T-cell (primary cell): ENCODE measurements at regions of chr12 and their contacts with region 1.

Region 1: DNA sequence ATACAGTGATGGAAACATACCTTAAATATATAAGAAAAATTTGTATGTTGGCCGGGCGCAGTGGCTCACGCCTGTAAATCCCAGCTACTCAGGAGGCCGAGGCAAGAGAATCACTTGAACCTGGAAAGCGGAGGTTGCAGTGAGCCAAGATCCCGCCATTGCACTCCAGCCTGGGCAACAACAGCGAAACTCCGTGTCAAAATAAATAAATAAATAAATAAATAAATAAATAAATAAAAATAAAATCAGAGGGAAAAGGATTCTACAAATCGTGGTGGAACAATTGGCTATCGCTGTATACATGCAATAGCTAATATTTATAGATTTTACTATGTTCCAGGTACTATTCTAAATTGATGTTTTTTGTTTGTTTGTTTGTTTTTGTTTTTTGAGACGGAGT is 1.7 kb upstream of the ATF7 start:
- DNase-seq: no peak
- ATAC-seq: no peak
- H3K4me3 ChIP-seq: no peak overlapping the region
- H3K4me3 Mint-ChIP-seq: no peak overlapping the region
- H3K27ac ChIP-seq: no peak overlapping the region
- H3K27ac Mint-ChIP-seq: no peak overlapping the region
- H3K4me1 ChIP-seq: peaks cover 15 to 28% of the 10 kb centered on the region in 2 experiments
- H3K4me1 Mint-ChIP-seq: peaks cover 37 to 41% (median 39%) of the 10 kb centered on the region in 3 donors
- H3K27me3 ChIP-seq: peaks cover 0 to 3% of the 10 kb centered on the region in 2 experiments
- H3K27me3 Mint-ChIP-seq: no peaks in the 10 kb centered on the region

Region 2: DNA sequence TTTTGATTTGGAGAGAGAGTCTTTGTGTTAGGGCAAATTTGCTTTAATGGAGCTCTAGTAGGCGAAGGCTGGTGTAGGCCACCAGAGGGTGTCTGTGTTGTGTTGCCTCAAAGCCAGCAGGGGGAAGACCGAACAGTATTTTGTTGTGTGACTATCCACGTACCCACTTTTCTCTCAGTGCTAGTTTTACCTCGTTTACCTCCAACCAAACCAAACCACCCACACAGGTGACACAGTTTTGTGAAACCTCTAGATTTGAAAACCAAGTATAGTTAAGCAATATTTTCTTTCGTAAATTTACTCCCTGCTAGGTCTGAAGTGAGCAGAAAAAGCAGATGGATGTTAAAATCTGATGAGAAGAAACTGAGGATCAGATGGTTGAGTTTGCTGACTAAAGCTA is 84.4 kb before region 1 on chr12:
- CTCF ChIA-PET with region 1: no interaction called
- POLR2A ChIA-PET with region 1: no interaction called
- DNase-seq: peak in 33 of 35 experiments; percentile 3 to 72 (median 45)
- ATAC-seq: peak; percentile 88 to 93 (median 91)
- H3K4me3 ChIP-seq: no peak overlapping the region
- H3K4me3 Mint-ChIP-seq: no peak overlapping the region
- H3K27ac ChIP-seq: peak overlapping the region; percentile 15
- H3K27ac Mint-ChIP-seq: peak overlapping the region; percentile 84 to 85
- H3K4me1 ChIP-seq: peaks cover 4% of the 10 kb centered on the region in 2 experiments
- H3K4me1 Mint-ChIP-seq: peaks cover 7 to 14% (median 9%) of the 10 kb centered on the region in 3 donors
- H3K27me3 ChIP-seq: no peaks in the 10 kb centered on the region
- H3K27me3 Mint-ChIP-seq: no peaks in the 10 kb centered on the region

Region 3: DNA sequence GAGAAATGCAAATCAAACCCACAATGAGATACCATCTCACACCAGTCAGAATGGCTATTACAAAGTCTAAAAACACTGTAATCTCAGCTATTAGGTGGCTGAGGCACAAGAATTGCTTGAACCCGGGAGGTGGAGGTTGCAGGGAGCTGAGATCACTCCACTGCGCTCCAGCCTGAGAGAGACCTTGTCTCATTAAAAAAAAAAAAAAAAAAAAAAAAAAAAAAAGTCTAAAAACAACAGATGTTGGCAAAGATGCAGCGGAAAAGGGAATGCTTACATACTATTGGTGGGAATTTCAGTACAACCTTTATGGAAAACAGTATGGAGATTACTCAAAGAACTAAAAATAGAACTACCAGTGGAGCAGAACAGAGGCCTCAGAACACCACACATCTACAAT is 17.2 kb after region 1 on chr12:
- CTCF ChIA-PET with region 1: interaction called in 1 of 2 experiments, 20 read pairs
- POLR2A ChIA-PET with region 1: no interaction called
- DNase-seq: no peak
- ATAC-seq: no peak
- H3K4me3 ChIP-seq: no peak overlapping the region
- H3K4me3 Mint-ChIP-seq: no peak overlapping the region
- H3K27ac ChIP-seq: no peak overlapping the region
- H3K27ac Mint-ChIP-seq: no peak overlapping the region
- H3K4me1 ChIP-seq: no peaks in the 10 kb centered on the region
- H3K4me1 Mint-ChIP-seq: no peaks in the 10 kb centered on the region
- H3K27me3 ChIP-seq: no peaks in the 10 kb centered on the region
- H3K27me3 Mint-ChIP-seq: peaks cover 2 to 3% of the 10 kb centered on the region in 2 donors